Gastrocnemius medialis (tissue), 4 donors: ENCODE measurements at regions of chr12 and their contacts with region 1.

Region 1: DNA sequence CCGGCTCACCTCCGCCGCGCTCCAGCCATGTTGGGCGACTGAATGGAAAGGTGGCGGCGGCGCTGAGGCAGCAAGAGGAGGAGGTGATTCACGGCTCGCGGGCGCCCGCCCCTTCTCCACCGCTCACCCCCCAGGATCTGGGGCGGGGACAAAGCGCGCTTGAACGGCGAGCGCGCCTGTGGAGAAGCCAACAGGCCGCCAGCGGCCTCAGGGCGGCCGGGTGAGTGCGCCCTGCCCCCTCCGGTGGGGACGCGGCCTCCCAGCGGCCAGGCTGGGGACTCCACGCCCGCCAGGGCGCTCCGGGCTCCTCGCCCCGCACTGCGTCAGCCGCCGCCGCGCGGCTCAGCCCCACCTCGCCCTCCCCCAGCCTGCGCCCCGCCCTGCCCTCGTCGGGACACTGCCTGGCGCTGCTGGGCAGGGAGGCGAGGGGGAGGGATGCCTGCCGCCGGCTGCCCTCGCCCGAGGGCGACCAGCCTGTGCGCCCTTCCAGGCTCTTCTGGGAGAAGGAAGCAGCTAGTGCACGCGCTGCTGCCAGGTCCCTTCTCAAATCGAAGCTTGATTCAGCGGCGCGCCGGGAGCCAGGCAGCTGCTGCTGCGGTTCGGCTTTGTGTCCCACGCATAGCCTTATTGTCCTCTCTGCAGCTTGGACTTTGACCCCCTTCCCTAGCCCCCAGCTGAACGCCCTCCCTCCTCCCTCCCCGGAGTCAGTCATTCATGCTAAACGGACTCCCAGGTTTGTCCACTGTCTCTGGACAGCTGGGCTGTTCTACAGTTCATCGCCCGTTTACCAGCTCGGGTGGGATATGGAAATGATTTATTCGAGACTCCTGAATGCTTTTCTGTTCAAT is at the start of gene KIF21A:
- DNase-seq: peak; percentile 84 to 92
- ATAC-seq: peak; percentile 80 to 83
- H3K4me3 ChIP-seq: peak within 1 kb of the TSS; percentile 60 to 84 (median 70)
- H3K27ac ChIP-seq: peak within 1 kb of the TSS; percentile 86 to 98 (median 95)
- H3K4me1 ChIP-seq: peaks cover 17 to 25% of the 10 kb centered on the region in 2 donors
- H3K27me3 ChIP-seq: no peaks in the 10 kb centered on the region
- CTCF ChIP-seq: peak; percentile 61 to 86 (median 81)
- POLR2A ChIP-seq: peak; percentile 83 to 89
- total RNA-seq, gene KIF21A: 28.4 to 36.4 (median 33.1) TPM

Region 2: DNA sequence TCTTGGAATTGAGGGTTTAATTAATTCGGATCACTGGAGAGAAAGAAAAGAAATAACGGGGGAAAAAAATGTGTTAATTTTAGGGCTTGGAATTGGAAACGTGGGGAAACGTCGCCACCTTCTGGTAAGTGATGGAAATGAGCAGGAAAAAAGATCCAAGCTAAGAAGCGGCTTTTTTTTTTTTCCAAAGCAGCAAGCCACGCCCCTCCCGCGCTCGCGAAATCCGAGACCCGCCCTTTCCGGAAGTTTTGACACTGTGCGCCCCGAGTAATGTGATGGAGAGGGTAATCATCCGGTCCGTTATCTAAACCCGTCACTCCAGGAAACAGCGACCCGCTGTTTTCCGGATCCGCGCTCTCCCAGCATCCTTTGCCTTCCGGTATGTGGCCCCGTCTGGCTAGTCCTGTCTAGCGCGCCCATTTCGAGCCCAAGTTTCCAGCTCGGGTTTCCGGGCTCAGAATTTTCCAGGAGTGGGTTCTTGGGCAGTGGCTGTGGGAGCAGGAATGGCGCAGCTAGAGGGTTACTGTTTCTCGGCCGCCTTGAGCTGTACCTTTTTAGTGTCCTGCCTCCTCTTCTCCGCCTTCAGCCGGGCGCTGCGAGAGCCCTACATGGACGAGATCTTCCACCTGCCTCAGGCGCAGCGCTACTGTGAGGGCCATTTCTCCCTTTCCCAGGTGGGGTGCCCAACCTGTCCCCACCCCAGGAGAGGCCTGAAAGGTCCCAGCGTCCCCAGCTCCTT is 1126.7 kb before region 1 on chr12 and contains the start of gene ALG10B:
- in situ Hi-C with region 1: no loop called
- intact Hi-C with region 1: loop called (anchors 2 kb)
- DNase-seq: peak; percentile 87 to 90
- ATAC-seq: peak; percentile 100
- H3K4me3 ChIP-seq: peak within 1 kb of the TSS; percentile 73 to 84 (median 75)
- H3K27ac ChIP-seq: peak within 1 kb of the TSS; percentile 72 to 86 (median 84)
- H3K4me1 ChIP-seq: peaks cover 12% of the 10 kb centered on the region in 2 donors
- H3K27me3 ChIP-seq: no peaks in the 10 kb centered on the region
- CTCF ChIP-seq: peak; percentile 41 to 79 (median 59)
- POLR2A ChIP-seq: no peak
- total RNA-seq, gene ALG10B: 1.1 to 3.8 (median 3.2) TPM

Region 3: GRCh38 chr12:39294715-39295114 is 148.6 kb before region 1 on chr12:
- in situ Hi-C with region 1: no loop called
- intact Hi-C with region 1: no loop called
- DNase-seq: no peak
- ATAC-seq: no peak
- H3K4me3 ChIP-seq: no peak overlapping the region
- H3K27ac ChIP-seq: no peak overlapping the region
- H3K4me1 ChIP-seq: no peaks in the 10 kb centered on the region
- H3K27me3 ChIP-seq: no peaks in the 10 kb centered on the region
- CTCF ChIP-seq: no peak
- POLR2A ChIP-seq: no peak

Region 4: GRCh38 chr12:39319187-39319586 is 124.1 kb before region 1 on chr12:
- in situ Hi-C with region 1: no loop called
- intact Hi-C with region 1: loop called (anchors 2 kb)
- DNase-seq: no peak
- ATAC-seq: no peak
- H3K4me3 ChIP-seq: no peak overlapping the region
- H3K27ac ChIP-seq: no peak overlapping the region
- H3K4me1 ChIP-seq: no peaks in the 10 kb centered on the region
- H3K27me3 ChIP-seq: no peaks in the 10 kb centered on the region
- CTCF ChIP-seq: no peak
- POLR2A ChIP-seq: no peak

Region 5: DNA sequence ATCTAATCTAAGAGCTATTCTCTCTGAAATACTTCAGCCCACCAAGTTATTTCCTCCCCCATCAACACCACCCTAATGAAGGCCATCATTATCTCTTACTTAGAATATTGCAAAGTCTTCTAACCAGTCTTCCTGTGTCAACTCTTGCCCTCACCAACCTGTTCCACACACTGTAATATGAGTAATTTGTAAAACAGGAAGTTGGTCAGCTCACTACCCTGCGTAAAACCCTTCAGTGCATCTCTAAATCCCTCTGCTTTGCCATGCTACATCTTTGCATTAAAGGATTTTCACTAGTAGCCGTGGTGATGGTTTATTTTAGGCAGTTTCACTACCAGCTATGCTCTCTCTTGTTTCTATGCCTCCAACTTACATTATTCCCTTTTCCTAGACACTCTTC is 70.4 kb before region 1 on chr12:
- in situ Hi-C with region 1: no loop called
- intact Hi-C with region 1: loop called (anchors 5 kb)
- DNase-seq: no peak
- ATAC-seq: no peak
- H3K4me3 ChIP-seq: no peak overlapping the region
- H3K27ac ChIP-seq: no peak overlapping the region
- H3K4me1 ChIP-seq: no peaks in the 10 kb centered on the region
- H3K27me3 ChIP-seq: no peaks in the 10 kb centered on the region
- CTCF ChIP-seq: no peak
- POLR2A ChIP-seq: no peak

Region 6: DNA sequence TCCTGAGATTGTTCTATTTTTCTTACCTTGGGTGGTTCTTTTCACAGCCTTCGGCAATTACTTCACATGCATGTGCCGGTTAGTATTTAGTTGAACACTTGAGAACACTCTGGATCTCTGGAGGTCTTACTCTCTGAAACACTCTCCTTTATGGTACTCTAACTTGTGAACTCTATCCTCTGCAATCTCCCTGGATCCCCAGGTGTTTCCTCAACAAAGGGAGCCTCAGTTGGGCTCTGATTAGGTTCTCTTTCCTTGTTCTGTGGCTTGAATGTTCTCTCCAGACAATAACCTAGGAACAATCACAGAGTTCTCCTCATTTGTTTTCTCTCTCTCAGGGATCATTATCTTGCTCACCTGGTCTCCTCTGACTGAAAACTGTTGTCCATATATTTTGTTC is 216.8 kb after region 1 on chr12:
- in situ Hi-C with region 1: no loop called
- intact Hi-C with region 1: no loop called
- DNase-seq: no peak
- ATAC-seq: no peak
- H3K4me3 ChIP-seq: no peak overlapping the region
- H3K27ac ChIP-seq: no peak overlapping the region
- H3K4me1 ChIP-seq: no peaks in the 10 kb centered on the region
- H3K27me3 ChIP-seq: no peaks in the 10 kb centered on the region
- CTCF ChIP-seq: no peak
- POLR2A ChIP-seq: no peak

Region 7: GRCh38 chr12:40224439-40225291 is 781.4 kb after region 1 on chr12 and contains the start of gene LRRK2:
- in situ Hi-C with region 1: no loop called
- intact Hi-C with region 1: loop called (anchors 10 kb)
- DNase-seq: peak; percentile 53 to 73
- ATAC-seq: peak; percentile 84 to 85
- H3K4me3 ChIP-seq: peak within 1 kb of the TSS; percentile 65 to 94 (median 80)
- H3K27ac ChIP-seq: peak within 1 kb of the TSS; percentile 74 to 99 (median 94)
- H3K4me1 ChIP-seq: peaks cover 11 to 23% of the 10 kb centered on the region in 2 donors
- H3K27me3 ChIP-seq: no peaks in the 10 kb centered on the region
- CTCF ChIP-seq: peak in 2 of 5 experiments; percentile 6 to 12
- POLR2A ChIP-seq: peak; percentile 39 to 55
- total RNA-seq, gene LRRK2: 4.5 to 10.7 (median 6.2) TPM

Region 8: DNA sequence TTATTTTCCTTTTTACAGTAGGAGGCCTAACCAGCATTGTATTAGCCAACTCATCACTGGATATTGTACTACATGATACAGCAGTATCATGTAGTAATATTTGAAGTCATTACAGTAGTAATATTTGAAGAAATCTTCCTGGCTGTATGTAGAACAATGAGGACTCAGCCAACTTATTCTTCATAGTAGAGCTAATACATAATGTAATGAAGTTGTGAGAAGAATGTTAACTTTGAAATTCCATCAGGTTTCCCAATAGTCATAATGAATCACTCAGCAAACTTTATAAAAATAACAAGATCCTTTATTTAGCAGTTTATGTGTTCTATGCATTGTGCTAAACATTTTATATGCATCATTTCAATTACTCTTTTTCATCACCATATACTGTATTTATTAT is 843.3 kb after region 1 on chr12:
- in situ Hi-C with region 1: no loop called
- intact Hi-C with region 1: no loop called
- DNase-seq: no peak
- ATAC-seq: no peak
- H3K4me3 ChIP-seq: no peak overlapping the region
- H3K27ac ChIP-seq: no peak overlapping the region
- H3K4me1 ChIP-seq: no peaks in the 10 kb centered on the region
- H3K27me3 ChIP-seq: no peaks in the 10 kb centered on the region
- CTCF ChIP-seq: no peak
- POLR2A ChIP-seq: no peak